ENCODE measurements at regions of chr20 and their contacts with region 1.

Region 1: DNA sequence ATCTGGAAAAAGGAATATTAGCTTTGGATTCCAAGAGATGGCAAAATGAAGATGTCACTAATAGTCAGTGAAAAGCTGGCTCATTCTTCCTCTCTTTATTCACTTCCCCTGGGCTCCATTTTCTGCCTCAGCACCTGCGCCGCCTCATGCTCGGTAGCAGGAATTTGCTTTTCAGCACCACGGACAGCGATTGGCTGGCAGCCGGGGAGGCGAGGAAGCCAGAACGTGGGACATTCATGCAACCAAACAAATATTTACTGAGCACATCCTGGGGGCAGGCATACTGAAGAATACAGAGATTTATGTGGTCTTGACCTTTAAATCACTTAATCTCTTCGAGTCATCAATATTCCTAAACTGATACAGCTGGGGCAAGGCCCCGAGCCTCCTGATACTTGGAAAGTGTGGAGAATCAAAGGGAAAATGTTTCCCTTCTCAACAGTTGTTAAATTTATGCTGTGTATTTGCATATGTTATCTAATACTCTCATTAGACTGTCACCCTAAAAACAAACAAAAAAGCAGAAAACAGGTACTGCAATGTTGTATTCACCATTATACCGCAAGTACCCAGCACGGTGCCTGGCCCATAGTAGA is 12.1 kb upstream of the PDYN start:
- DNase-seq: no peak
- ATAC-seq: peak; percentile 73
- H3K4me3 ChIP-seq: no peak overlapping the region
- H3K27ac ChIP-seq: no peak overlapping the region
- H3K4me1 ChIP-seq: no peaks in the 10 kb centered on the region
- H3K27me3 ChIP-seq: no peaks in the 10 kb centered on the region; a peak in 2 of 4 replicates
- CTCF ChIP-seq: 0 out of 6 replicates have a peak, but pooled peaks of 1 of the 3 experiments have one; percentile 1
- EP300 ChIP-seq: no peak
- POLR2A ChIP-seq: no peak
- RAD21 ChIP-seq: 0 out of 2 replicates have a peak, but pooled peaks have one; percentile 3

Region 2: DNA sequence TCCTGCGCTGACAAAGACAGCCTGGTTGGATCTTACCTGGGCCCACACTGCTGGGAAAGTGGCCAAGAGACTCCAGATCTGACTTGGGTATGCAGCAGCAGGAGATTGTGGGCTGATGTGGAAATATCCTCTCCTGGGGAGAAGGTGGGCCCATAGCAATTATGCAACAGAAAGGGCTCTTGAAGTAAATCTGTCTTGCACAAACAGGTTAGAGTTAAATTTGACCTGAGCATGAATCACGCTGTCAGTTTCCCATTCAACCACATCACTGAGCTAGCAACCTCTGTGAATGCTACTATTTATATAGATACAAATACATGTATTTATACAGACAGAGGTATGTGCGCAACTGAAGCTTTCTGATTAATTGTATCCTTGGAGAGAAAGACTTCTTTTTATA is 16.2 kb after region 1 on chr20:
- CTCF ChIA-PET with region 1: interaction called, 10 read pairs
- POLR2A ChIA-PET with region 1: no interaction called
- RAD21 ChIA-PET with region 1: no interaction called
- SMC1A ChIA-PET with region 1: no interaction called
- in situ Hi-C with region 1: no loop called
- intact Hi-C with region 1: no loop called
- DNase-seq: no peak
- ATAC-seq: no peak
- H3K4me3 ChIP-seq: no peak overlapping the region
- H3K27ac ChIP-seq: no peak overlapping the region
- H3K4me1 ChIP-seq: no peaks in the 10 kb centered on the region
- H3K27me3 ChIP-seq: no peaks in the 10 kb centered on the region
- CTCF ChIP-seq: no peak
- EP300 ChIP-seq: no peak
- POLR2A ChIP-seq: no peak
- RAD21 ChIP-seq: no peak

Measured in GM12878 (cell line).